Breast epithelium (tissue), 4 donors: ENCODE measurements at regions of chr14 and their contacts with region 1.

Region 1: GRCh38 chr14:82138431-82138830 is 604.8 kb upstream of the SEL1L start:
- DNase-seq: no peak
- H3K4me3 ChIP-seq: no peak overlapping the region
- H3K27ac ChIP-seq: no peak overlapping the region
- H3K4me1 ChIP-seq: no peaks in the 10 kb centered on the region
- H3K27me3 ChIP-seq: no peaks in the 10 kb centered on the region
- CTCF ChIP-seq: no peak
- POLR2A ChIP-seq: no peak

Region 2: GRCh38 chr14:82113710-82114109 is 24.7 kb before region 1 on chr14:
- intact Hi-C with region 1: no loop called
- DNase-seq: no peak
- H3K4me3 ChIP-seq: no peak overlapping the region
- H3K27ac ChIP-seq: no peak overlapping the region
- H3K4me1 ChIP-seq: no peaks in the 10 kb centered on the region
- H3K27me3 ChIP-seq: no peaks in the 10 kb centered on the region
- CTCF ChIP-seq: no peak
- POLR2A ChIP-seq: no peak

Region 3: DNA sequence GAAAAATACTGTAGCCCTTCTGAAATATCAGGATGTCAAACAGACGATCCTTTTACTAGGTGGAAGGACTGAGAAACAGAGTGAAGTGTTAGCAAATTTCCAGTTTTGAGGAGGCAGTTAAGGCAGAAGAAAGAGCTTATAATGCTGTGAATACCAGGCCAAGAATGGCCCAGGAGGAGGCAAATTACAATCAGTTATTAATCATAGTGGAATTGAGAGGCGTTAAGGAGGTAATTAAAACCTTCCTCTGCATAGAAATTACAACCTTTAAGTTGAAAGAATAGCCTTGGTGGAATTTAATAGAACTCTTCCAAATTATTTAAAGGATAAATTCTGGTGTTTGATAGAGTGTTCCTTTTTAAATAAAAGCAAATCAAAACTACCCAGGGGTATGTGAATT is 13.9 kb before region 1 on chr14:
- intact Hi-C with region 1: loop called (anchors 1 kb)
- DNase-seq: no peak
- H3K4me3 ChIP-seq: no peak overlapping the region
- H3K27ac ChIP-seq: no peak overlapping the region
- H3K4me1 ChIP-seq: no peaks in the 10 kb centered on the region
- H3K27me3 ChIP-seq: no peaks in the 10 kb centered on the region
- CTCF ChIP-seq: no peak
- POLR2A ChIP-seq: no peak